Naive thymus-derived CD4-positive, alpha-beta T cell (primary cell): ENCODE measurements at regions of chr9 and their contacts with region 1.

Region 1: GRCh38 chr9:20508242-20508641 is 114.1 kb downstream of the MLLT3 start:
- DNase-seq: peak in 3 of 9 donors; percentile 8 to 22 (median 14)
- ATAC-seq: peak; percentile 60
- H3K4me3 ChIP-seq: no peak overlapping the region
- H3K4me3 Mint-ChIP-seq: peak overlapping the region; percentile 4 to 76 (median 64)
- H3K27ac ChIP-seq: peak overlapping the region; percentile 24
- H3K27ac Mint-ChIP-seq: peak overlapping the region; percentile 54 to 95 (median 85)
- H3K4me1 ChIP-seq: peaks cover 11 to 54% of the 10 kb centered on the region in 2 donors
- H3K4me1 Mint-ChIP-seq: peaks cover 64 to 90% (median 89%) of the 10 kb centered on the region in 7 donors
- H3K27me3 ChIP-seq: no peaks in the 10 kb centered on the region
- H3K27me3 Mint-ChIP-seq: no peaks in the 10 kb centered on the region

Region 2: DNA sequence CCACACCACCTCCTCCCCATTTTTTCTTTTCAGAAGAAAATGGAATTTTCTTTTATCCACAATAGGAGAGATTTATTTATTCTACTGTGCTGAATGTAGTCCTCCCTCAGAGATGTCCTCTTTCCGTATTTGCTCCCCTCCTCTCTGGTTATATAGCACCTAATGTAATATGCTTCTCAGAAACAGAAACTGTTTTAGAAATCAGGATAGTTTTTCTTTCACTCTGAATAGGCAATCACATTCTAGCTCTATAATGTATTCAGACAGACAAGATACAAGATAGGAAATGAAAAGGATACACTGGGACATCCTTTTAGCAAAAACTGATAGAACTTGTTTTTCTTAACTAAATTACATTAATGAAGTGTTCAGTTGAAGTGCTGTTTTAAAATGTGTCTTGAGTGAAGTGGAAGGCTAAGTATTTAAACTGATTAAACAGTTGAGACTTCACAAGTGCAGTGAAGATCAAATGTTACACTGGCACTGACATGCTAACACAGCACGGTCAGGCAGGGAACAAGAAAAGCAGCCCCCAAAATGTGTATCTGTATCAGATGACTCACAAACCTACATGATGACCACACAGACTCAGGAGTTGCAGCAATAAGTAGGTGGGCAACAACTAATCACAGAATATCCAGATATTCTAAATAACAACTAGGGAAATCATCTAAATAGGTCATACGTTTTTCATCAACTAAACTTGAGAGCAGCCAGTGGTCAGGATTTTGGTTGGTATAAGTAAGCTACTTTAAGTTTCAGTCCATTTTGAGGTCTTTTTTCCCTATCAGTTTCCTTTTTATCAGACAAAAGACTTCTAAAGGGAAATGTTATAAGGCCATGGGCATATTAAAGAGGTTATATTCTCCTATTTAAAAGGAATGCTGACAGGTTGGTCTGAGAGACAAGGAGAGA is 146.3 kb before region 1 on chr9:
- CTCF ChIA-PET with region 1: no interaction called
- POLR2A ChIA-PET with region 1: no interaction called
- intact Hi-C with region 1: loop called in 1 of 2 experiments (anchors 5 kb)
- DNase-seq: peak in 2 of 9 donors; percentile 18 to 23
- ATAC-seq: peak; percentile 58
- H3K4me3 ChIP-seq: no peak overlapping the region
- H3K4me3 Mint-ChIP-seq: peak overlapping the region; percentile 11 to 76 (median 67)
- H3K27ac ChIP-seq: peak overlapping the region; percentile 45
- H3K27ac Mint-ChIP-seq: peak overlapping the region; percentile 65 to 94 (median 86)
- H3K4me1 ChIP-seq: peaks cover 0 to 31% of the 10 kb centered on the region in 2 donors
- H3K4me1 Mint-ChIP-seq: peaks cover 28 to 91% (median 65%) of the 10 kb centered on the region in 7 donors
- H3K27me3 ChIP-seq: no peaks in the 10 kb centered on the region
- H3K27me3 Mint-ChIP-seq: no peaks in the 10 kb centered on the region

Region 3: DNA sequence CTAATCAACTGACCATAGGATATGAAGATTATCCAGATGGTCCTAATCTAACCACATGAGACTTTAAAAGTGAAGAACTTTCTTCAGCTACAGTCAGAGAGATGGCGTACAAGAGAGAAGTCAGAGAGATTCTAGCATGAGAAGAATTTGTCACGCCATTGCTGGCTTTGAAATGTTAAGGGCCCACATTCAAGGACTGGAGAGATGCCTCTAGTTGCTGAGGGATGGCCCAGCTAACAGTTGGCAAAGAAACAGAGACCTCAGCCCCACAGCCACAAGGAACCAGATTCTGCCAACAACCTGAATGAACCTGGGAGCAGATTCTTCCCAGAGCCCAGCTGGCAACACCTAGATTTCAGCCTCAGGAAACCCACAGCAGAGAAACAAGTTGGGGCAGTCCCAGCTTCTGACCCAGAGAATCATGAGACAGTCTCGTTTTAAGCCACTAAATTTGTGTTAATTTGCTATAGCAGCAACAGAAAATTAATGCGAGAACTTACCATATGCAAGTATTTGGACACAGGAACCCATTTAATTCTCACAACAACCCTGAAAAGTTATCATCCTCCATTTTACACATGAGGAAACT is 17.9 kb before region 1 on chr9:
- CTCF ChIA-PET with region 1: no interaction called
- POLR2A ChIA-PET with region 1: no interaction called
- intact Hi-C with region 1: loop called in 1 of 2 experiments (anchors 1 kb)
- DNase-seq: no peak
- ATAC-seq: no peak
- H3K4me3 ChIP-seq: no peak overlapping the region
- H3K4me3 Mint-ChIP-seq: peak overlapping the region in 4 of 10 donors; percentile 23 to 35 (median 30)
- H3K27ac ChIP-seq: no peak overlapping the region
- H3K27ac Mint-ChIP-seq: peak overlapping the region in 1 of 9 donors; percentile 48
- H3K4me1 ChIP-seq: peaks cover 0 to 24% of the 10 kb centered on the region in 2 donors
- H3K4me1 Mint-ChIP-seq: peaks cover 20 to 85% (median 70%) of the 10 kb centered on the region in 7 donors
- H3K27me3 ChIP-seq: no peaks in the 10 kb centered on the region
- H3K27me3 Mint-ChIP-seq: no peaks in the 10 kb centered on the region

Region 4: DNA sequence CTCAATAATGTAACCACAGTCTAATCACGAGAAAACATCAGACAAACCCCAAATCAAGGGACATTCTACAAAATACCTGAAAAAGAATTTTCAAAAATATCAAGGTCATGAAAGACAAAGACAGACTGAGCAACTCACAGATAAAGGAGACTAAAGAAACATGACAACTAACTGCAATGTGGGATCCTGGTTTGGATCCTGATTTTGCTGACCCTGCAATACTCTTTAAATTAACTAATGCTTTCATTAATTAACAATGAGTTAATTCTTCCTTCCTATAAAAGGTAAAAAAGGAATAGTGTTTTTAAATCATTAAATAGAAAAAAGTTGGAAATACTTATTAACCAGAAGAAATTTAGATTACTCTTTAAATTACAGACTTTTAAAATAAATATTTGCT is 10.5 kb after region 1 on chr9:
- CTCF ChIA-PET with region 1: no interaction called
- POLR2A ChIA-PET with region 1: interaction called, 3 read pairs
- intact Hi-C with region 1: loop called in 1 of 2 experiments (anchors 1 kb)
- DNase-seq: no peak
- ATAC-seq: no peak
- H3K4me3 ChIP-seq: no peak overlapping the region
- H3K4me3 Mint-ChIP-seq: no peak overlapping the region
- H3K27ac ChIP-seq: no peak overlapping the region
- H3K27ac Mint-ChIP-seq: no peak overlapping the region
- H3K4me1 ChIP-seq: peaks cover under 1 to 31% of the 10 kb centered on the region in 2 donors
- H3K4me1 Mint-ChIP-seq: peaks cover 56 to 95% (median 87%) of the 10 kb centered on the region in 7 donors
- H3K27me3 ChIP-seq: no peaks in the 10 kb centered on the region
- H3K27me3 Mint-ChIP-seq: no peaks in the 10 kb centered on the region

Region 5: GRCh38 chr9:20524776-20525175 is 16.5 kb after region 1 on chr9:
- CTCF ChIA-PET with region 1: interaction called, 4 read pairs
- POLR2A ChIA-PET with region 1: interaction called, 3 read pairs
- intact Hi-C with region 1: loop called (anchors 2 kb)
- DNase-seq: no peak
- ATAC-seq: no peak
- H3K4me3 ChIP-seq: no peak overlapping the region
- H3K4me3 Mint-ChIP-seq: peak overlapping the region in 4 of 10 donors; percentile 11 to 49 (median 33)
- H3K27ac ChIP-seq: no peak overlapping the region
- H3K27ac Mint-ChIP-seq: peak overlapping the region in 3 of 9 donors; percentile 36 to 63 (median 62)
- H3K4me1 ChIP-seq: peaks cover 0 to 38% of the 10 kb centered on the region in 2 donors
- H3K4me1 Mint-ChIP-seq: peaks cover 54 to 100% (median 93%) of the 10 kb centered on the region in 7 donors
- H3K27me3 ChIP-seq: no peaks in the 10 kb centered on the region
- H3K27me3 Mint-ChIP-seq: no peaks in the 10 kb centered on the region

Region 6: GRCh38 chr9:20544953-20545622 is 36.8 kb after region 1 on chr9:
- CTCF ChIA-PET with region 1: no interaction called
- POLR2A ChIA-PET with region 1: no interaction called
- intact Hi-C with region 1: loop called in 1 of 2 experiments (anchors 5 kb)
- DNase-seq: no peak
- ATAC-seq: no peak
- H3K4me3 ChIP-seq: no peak overlapping the region
- H3K4me3 Mint-ChIP-seq: peak overlapping the region in 1 of 10 donors; percentile 4
- H3K27ac ChIP-seq: no peak overlapping the region
- H3K27ac Mint-ChIP-seq: peak overlapping the region in 1 of 9 donors; percentile 49
- H3K4me1 ChIP-seq: peaks cover 0 to 7% of the 10 kb centered on the region in 2 donors
- H3K4me1 Mint-ChIP-seq: peaks cover 28 to 76% (median 61%) of the 10 kb centered on the region in 7 donors
- H3K27me3 ChIP-seq: no peaks in the 10 kb centered on the region
- H3K27me3 Mint-ChIP-seq: no peaks in the 10 kb centered on the region

Region 7: DNA sequence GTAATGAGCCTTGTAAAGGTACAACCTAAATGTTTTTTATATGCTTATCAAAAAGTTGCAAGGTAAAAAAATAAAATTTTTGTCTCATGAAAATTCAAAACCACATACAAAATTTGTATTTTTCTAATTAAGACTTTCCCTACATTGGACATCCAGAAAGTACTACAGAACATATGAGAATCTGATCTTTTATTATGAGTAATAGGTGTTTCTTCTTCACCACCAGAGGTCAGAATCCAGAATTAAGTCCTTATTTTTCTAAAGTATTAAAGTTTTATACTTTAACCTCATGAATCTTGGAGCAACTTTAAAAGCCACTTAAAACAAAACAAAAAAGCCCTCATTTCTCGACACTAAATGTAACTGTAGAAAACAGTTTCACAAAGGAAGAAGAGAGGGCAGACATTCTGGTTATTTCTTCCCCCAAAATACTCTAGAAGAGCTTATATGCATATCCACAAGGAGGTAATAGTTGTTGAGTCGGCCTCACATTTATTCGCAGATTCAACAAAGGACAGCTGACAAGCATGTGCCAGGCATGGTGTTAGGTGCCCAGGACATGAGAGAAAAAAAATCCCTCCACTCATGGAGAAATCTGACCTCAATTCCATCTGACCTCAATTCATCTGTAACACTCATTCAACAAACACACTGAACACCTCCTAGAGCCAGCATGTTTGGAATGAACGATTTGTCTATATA is 44.8 kb after region 1 on chr9:
- CTCF ChIA-PET with region 1: no interaction called
- POLR2A ChIA-PET with region 1: no interaction called
- intact Hi-C with region 1: loop called in 1 of 2 experiments (anchors 2 kb)
- DNase-seq: peak in 1 of 9 donors; percentile 28
- ATAC-seq: no peak
- H3K4me3 ChIP-seq: no peak overlapping the region
- H3K4me3 Mint-ChIP-seq: peak overlapping the region; percentile 27 to 84 (median 46)
- H3K27ac ChIP-seq: no peak overlapping the region
- H3K27ac Mint-ChIP-seq: peak overlapping the region; percentile 2 to 79 (median 54)
- H3K4me1 ChIP-seq: peaks cover 23 to 33% of the 10 kb centered on the region in 2 donors
- H3K4me1 Mint-ChIP-seq: peaks cover 58 to 86% (median 79%) of the 10 kb centered on the region in 7 donors
- H3K27me3 ChIP-seq: no peaks in the 10 kb centered on the region
- H3K27me3 Mint-ChIP-seq: no peaks in the 10 kb centered on the region

Region 8: GRCh38 chr9:21311889-21312288 is 803.6 kb after region 1 on chr9:
- CTCF ChIA-PET with region 1: no interaction called
- POLR2A ChIA-PET with region 1: no interaction called
- intact Hi-C with region 1: no loop called
- DNase-seq: no peak
- ATAC-seq: no peak
- H3K4me3 ChIP-seq: no peak overlapping the region
- H3K4me3 Mint-ChIP-seq: no peak overlapping the region
- H3K27ac ChIP-seq: no peak overlapping the region
- H3K27ac Mint-ChIP-seq: peak overlapping the region in 1 of 9 donors; percentile 40
- H3K4me1 ChIP-seq: no peaks in the 10 kb centered on the region
- H3K4me1 Mint-ChIP-seq: no peaks in the 10 kb centered on the region
- H3K27me3 ChIP-seq: peaks cover 0 to 8% of the 10 kb centered on the region in 2 donors
- H3K27me3 Mint-ChIP-seq: peaks cover 11 to 39% (median 14%) of the 10 kb centered on the region in 5 donors